ENCODE measurements at regions of chr18 and their contacts with region 1.

Region 1: GRCh38 chr18:64017870-64018269 is 48.0 kb downstream of the SERPINB8 start:
- DNase-seq: peak; percentile 62
- H3K4me3 Mint-ChIP-seq: no peak overlapping the region
- H3K27ac Mint-ChIP-seq: no peak overlapping the region
- H3K4me1 Mint-ChIP-seq: no peaks in the 10 kb centered on the region
- H3K27me3 Mint-ChIP-seq: peaks cover 79% of the 10 kb centered on the region
- CTCF ChIP-seq: peak; percentile 51

Region 2: GRCh38 chr18:63897072-63897471 is 120.8 kb before region 1 on chr18:
- CTCF ChIA-PET with region 1: no interaction called
- POLR2A ChIA-PET with region 1: no interaction called
- intact Hi-C with region 1: no loop called
- DNase-seq: peak; percentile 43
- H3K4me3 Mint-ChIP-seq: no peak overlapping the region
- H3K27ac Mint-ChIP-seq: no peak overlapping the region
- H3K4me1 Mint-ChIP-seq: peaks cover 4% of the 10 kb centered on the region
- H3K27me3 Mint-ChIP-seq: no peaks in the 10 kb centered on the region
- CTCF ChIP-seq: no peak

Region 3: GRCh38 chr18:64002581-64002980 is 15.3 kb before region 1 on chr18:
- CTCF ChIA-PET with region 1: interaction called, 13 read pairs
- POLR2A ChIA-PET with region 1: interaction called, 5 read pairs
- intact Hi-C with region 1: no loop called
- DNase-seq: no peak
- H3K4me3 Mint-ChIP-seq: no peak overlapping the region
- H3K27ac Mint-ChIP-seq: no peak overlapping the region
- H3K4me1 Mint-ChIP-seq: no peaks in the 10 kb centered on the region
- H3K27me3 Mint-ChIP-seq: peaks cover 20% of the 10 kb centered on the region
- CTCF ChIP-seq: no peak

Region 4: GRCh38 chr18:64191069-64191468 is 173.2 kb after region 1 on chr18:
- CTCF ChIA-PET with region 1: no interaction called
- POLR2A ChIA-PET with region 1: no interaction called
- intact Hi-C with region 1: no loop called
- DNase-seq: no peak
- H3K4me3 Mint-ChIP-seq: no peak overlapping the region
- H3K27ac Mint-ChIP-seq: no peak overlapping the region
- H3K4me1 Mint-ChIP-seq: no peaks in the 10 kb centered on the region
- H3K27me3 Mint-ChIP-seq: peaks cover 71% of the 10 kb centered on the region
- CTCF ChIP-seq: no peak

Region 5: DNA sequence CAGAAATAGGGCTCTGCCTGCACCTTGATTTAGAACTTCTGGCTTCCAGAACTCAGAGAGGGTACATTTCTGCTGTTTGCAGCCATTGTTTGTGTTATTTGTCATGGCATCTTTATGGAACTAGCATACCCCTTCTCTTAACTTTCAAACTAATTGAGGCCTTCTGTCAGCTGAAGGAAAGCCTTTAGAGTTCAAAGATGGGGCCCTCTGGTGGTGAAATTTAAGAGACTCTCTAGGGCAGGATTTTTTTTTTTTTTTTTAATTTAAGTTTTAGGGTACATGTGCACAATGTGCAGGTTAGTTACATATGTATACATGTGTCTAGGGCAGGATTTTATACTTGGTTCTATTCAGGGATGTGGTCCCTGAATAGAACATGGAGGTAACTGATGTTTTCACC is 391.6 kb after region 1 on chr18:
- CTCF ChIA-PET with region 1: no interaction called
- POLR2A ChIA-PET with region 1: no interaction called
- intact Hi-C with region 1: loop called (anchors 5 kb)
- DNase-seq: peak; percentile 51
- H3K4me3 Mint-ChIP-seq: no peak overlapping the region
- H3K27ac Mint-ChIP-seq: no peak overlapping the region
- H3K4me1 Mint-ChIP-seq: no peaks in the 10 kb centered on the region
- H3K27me3 Mint-ChIP-seq: peaks cover 25% of the 10 kb centered on the region
- CTCF ChIP-seq: peak; percentile 34